OCI-LY7 (cell line): ENCODE measurements at regions of chrX and their contacts with region 1.

Region 1: DNA sequence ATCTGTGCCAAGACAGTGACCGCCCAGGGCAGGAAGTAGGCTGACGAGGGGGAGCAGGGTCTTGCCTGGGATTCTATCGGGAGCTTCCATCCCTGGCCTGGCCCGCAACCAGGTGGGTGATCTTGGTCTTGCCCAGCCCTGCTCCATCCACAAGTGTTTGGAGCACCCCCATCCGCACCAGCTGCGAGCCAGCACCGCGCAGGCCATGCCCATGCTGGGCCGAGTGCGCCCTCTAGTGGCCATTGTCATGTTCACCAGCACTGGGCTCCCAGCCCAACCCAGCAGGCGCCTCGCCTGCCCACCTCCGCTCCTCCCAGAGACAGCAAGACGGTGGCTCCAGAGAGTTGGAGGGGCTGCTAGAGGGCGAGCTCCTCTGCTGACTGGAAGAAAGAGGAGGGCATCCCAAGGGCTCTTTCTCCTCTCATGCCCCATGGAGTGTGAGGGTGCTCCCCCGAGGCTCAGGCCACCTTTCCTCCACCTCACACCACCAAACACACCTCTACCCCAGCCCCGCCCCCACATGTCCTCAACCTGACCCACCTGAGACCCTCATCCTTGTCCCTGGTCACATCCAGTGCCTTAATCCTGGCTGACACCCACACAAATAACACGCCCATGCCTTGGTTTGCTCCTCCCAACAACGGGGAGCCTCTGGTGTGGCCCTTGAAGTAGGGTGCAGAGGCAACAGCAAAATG is 9.8 kb upstream of the ATP2B3 start:
- DNase-seq: peak; percentile 70
- H3K4me3 ChIP-seq: no peak overlapping the region
- H3K27ac ChIP-seq: no peak overlapping the region
- H3K4me1 ChIP-seq: no peaks in the 10 kb centered on the region
- CTCF ChIP-seq: peak; percentile 74

Region 2: DNA sequence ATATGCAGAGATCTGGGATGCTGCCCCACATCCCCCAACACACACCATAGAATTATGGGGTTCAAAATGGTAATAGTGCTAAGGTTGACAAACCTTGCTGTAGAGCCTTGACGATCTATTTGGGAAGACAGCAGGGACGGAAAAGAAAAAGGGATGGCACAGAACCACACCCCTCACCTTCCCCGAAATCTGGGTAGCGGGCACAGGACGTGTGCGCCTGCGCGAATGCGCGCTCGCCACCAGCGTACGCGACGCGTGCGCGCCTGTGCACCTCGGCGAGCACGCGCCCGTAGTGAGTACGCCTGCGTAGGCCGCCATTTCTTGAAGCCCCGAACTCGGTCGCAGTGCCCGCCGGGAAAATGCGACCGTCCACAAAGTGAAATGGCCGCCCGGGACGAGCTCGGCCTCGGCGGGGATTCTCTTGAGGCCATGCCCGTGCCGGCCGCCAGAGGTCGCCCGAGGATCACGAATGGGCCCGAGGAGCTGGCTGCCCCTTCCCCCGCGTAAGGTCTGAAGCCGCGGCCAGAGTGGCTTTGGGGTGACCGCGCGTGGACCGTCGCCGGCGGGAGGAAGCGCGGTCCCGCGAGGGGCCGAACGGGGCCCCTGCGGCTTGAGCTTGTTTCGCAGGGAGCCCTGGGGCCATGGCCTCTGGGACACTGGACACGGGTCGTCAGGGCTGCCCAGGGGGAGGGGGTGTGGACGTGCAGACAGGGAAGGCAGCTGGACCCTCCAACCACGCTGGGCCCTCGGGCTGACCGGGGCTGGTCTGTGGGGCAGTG is 566.1 kb before region 1 on chrX:
- CTCF ChIA-PET with region 1: no interaction called
- POLR2A ChIA-PET with region 1: no interaction called
- intact Hi-C with region 1: loop called (anchors 5 kb)
- DNase-seq: peak; percentile 95
- H3K4me3 ChIP-seq: peak overlapping the region; percentile 93
- H3K27ac ChIP-seq: peak overlapping the region; percentile 34
- H3K4me1 ChIP-seq: peaks cover 7% of the 10 kb centered on the region
- CTCF ChIP-seq: peak; percentile 71

Region 3: DNA sequence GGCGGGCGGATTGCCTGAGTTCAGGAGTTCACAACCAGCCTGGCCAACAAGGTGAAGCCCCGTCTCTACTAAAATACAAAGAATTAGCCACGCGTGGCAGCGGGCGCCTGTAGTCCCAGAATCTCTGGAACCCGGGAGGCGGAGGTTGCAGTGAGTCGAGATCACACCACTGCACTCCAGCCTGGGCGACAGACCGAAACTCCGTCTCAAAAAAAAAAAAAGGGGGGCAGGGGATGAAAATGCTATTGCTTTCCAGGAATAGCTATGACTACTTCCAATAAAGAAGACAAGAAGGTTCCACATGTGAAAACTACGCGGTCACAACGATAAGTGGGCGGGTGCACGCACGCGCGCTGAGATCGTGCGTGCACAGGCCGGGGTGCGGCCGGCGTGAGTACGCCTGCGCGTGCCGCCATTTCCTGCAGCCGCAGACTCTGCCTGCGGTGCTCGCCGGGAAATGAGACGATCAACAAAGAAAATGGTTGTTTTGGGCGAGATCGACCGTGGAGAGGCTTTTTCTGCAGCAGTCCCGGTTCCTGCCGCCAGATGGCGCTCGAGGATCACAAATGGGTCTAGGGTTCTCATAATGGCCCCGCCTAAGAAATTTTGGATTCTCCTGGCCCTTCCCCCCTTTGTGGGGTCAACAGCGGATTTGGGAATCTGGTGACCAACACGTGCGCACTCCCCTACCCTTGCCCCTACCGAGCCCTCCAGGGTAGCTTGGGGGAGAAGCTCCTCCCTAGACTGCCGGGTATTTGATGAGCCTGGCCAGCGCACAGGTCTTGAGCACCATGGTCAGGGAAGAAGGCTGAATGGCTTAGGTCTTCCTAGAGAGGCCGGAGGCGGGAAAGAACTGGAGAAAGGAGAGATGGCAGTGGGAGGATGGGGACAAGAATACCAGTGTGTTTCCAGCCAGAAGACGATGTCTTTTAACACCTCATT is 548.8 kb before region 1 on chrX:
- CTCF ChIA-PET with region 1: interaction called, 5 read pairs
- POLR2A ChIA-PET with region 1: no interaction called
- intact Hi-C with region 1: loop called (anchors 5 kb)
- DNase-seq: peak; percentile 86
- H3K4me3 ChIP-seq: peak overlapping the region; percentile 52
- H3K27ac ChIP-seq: no peak overlapping the region
- H3K4me1 ChIP-seq: peaks cover 8% of the 10 kb centered on the region
- CTCF ChIP-seq: peak; percentile 75

Region 4: GRCh38 chrX:153032397-153033118 is 475.1 kb before region 1 on chrX:
- CTCF ChIA-PET with region 1: interaction called, 4 read pairs
- POLR2A ChIA-PET with region 1: no interaction called
- intact Hi-C with region 1: loop called (anchors 5 kb)
- DNase-seq: peak; percentile 50
- H3K4me3 ChIP-seq: peak overlapping the region; percentile 8
- H3K27ac ChIP-seq: no peak overlapping the region
- H3K4me1 ChIP-seq: peaks cover 3% of the 10 kb centered on the region
- CTCF ChIP-seq: peak; percentile 75

Region 5: GRCh38 chrX:153460845-153461244 is 46.8 kb before region 1 on chrX:
- CTCF ChIA-PET with region 1: no interaction called
- POLR2A ChIA-PET with region 1: no interaction called
- intact Hi-C with region 1: loop called (anchors 2 kb)
- DNase-seq: peak; percentile 58
- H3K4me3 ChIP-seq: no peak overlapping the region
- H3K27ac ChIP-seq: no peak overlapping the region
- H3K4me1 ChIP-seq: no peaks in the 10 kb centered on the region
- CTCF ChIP-seq: peak; percentile 79

Region 6: GRCh38 chrX:153470435-153471363 is 36.9 kb before region 1 on chrX and contains the start of gene HAUS7:
- CTCF ChIA-PET with region 1: interaction called, 6 read pairs
- POLR2A ChIA-PET with region 1: no interaction called
- intact Hi-C with region 1: loop called (anchors 5 kb)
- DNase-seq: peak; percentile 87
- H3K4me3 ChIP-seq: peak within 1 kb of the TSS; percentile 96
- H3K27ac ChIP-seq: peak within 1 kb of the TSS; percentile 39
- H3K4me1 ChIP-seq: peaks cover 12% of the 10 kb centered on the region
- CTCF ChIP-seq: peak; percentile 75
- total RNA-seq, gene HAUS7: 42.5 and 60.3 TPM in 2 replicates

Region 7: DNA sequence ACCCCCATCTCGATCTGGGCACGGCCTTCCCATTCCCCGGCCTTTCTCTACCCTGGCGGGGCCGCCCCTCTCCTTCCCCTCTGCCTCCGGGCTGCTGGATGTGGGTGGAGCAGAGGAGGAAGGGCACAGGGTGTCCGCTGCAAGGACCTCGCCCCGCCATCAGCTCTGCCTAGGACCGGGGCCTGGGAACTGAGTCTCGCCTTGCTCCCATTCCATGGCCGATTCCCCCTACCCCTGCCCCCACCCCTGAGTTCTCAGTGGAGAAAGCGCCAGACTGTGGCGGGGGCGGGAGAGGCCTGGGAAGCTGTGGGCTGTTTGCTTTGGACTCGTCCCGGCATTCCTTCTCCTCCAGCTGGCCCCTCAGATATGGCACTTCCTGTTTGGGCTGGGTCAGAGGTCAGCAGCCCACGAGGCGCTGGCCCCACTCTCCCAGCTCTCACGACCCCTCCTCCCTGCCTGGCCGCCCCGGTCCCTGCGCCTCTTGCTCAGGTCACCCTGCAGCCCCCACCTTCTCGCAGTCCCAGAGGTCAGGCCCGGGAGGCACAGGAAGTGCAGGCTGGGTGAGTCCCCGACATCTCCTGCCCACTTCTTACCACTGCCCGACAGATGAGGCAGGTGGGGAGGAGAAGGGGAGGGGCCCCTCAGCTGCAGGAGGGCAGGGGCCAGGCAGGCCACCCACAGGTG is 19.3 kb before region 1 on chrX:
- CTCF ChIA-PET with region 1: no interaction called
- POLR2A ChIA-PET with region 1: no interaction called
- intact Hi-C with region 1: no loop called
- DNase-seq: no peak
- H3K4me3 ChIP-seq: no peak overlapping the region
- H3K27ac ChIP-seq: no peak overlapping the region
- H3K4me1 ChIP-seq: no peaks in the 10 kb centered on the region
- CTCF ChIP-seq: no peak